ENCODE measurements at regions of chr6 and their contacts with region 1.

Region 1: GRCh38 chr6:137944793-137945498 is 77.9 kb downstream of the TNFAIP3 start:
- DNase-seq: no peak
- ATAC-seq: peak; percentile 59 to 88 (median 82)
- H3K4me3 ChIP-seq: peak overlapping the region in 1 of 12 donors; percentile 23
- H3K27ac ChIP-seq: no peak overlapping the region
- H3K4me1 ChIP-seq: peaks cover 0 to 16% (median 0%) of the 10 kb centered on the region in 12 donors
- H3K27me3 ChIP-seq: no peaks in the 10 kb centered on the region
- CTCF ChIP-seq: peak; percentile 63 to 88 (median 78)
- POLR2A ChIP-seq: no peak

Region 2: GRCh38 chr6:137799950-137800568 is 144.9 kb before region 1 on chr6:
- intact Hi-C with region 1: loop called in 4 of 10 experiments (anchors 5 to 10 kb)
- DNase-seq: peak in 3 of 5 donors; percentile 29 to 48 (median 48)
- ATAC-seq: peak in 3 of 4 donors; percentile 42 to 54 (median 46)
- H3K4me3 ChIP-seq: no peak overlapping the region
- H3K27ac ChIP-seq: no peak overlapping the region
- H3K4me1 ChIP-seq: peaks cover 0 to 24% (median under 1%) of the 10 kb centered on the region in 12 donors
- H3K27me3 ChIP-seq: no peaks in the 10 kb centered on the region
- CTCF ChIP-seq: peak; percentile 19 to 66 (median 54)
- POLR2A ChIP-seq: no peak

Region 3: DNA sequence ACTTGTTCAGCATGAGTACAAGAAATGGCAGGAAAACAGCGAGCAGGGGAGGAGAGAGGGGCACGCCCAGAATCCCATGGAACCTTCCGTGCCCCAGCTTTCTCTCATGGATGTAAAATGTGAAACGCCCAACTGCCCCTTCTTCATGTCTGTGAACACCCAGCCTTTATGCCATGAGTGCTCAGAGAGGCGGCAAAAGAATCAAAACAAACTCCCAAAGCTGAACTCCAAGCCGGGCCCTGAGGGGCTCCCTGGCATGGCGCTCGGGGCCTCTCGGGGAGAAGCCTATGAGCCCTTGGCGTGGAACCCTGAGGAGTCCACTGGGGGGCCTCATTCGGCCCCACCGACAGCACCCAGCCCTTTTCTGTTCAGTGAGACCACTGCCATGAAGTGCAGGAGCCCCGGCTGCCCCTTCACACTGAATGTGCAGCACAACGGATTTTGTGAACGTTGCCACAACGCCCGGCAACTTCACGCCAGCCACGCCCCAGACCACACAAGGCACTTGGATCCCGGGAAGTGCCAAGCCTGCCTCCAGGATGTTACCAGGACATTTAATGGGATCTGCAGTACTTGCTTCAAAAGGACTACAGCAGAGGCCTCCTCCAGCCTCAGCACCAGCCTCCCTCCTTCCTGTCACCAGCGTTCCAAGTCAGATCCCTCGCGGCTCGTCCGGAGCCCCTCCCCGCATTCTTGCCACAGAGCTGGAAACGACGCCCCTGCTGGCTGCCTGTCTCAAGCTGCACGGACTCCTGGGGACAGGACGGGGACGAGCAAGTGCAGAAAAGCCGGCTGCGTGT is 66.3 kb before region 1 on chr6:
- intact Hi-C with region 1: loop called in 2 of 10 experiments (anchors 5 kb)
- DNase-seq: peak; percentile 52 to 81 (median 65)
- ATAC-seq: peak in 3 of 4 donors; percentile 60 to 69 (median 62)
- H3K4me3 ChIP-seq: no peak overlapping the region
- H3K27ac ChIP-seq: peak overlapping the region; percentile 4 to 63 (median 36)
- H3K4me1 ChIP-seq: peaks cover 0 to 82% (median 21%) of the 10 kb centered on the region in 12 donors
- H3K27me3 ChIP-seq: no peaks in the 10 kb centered on the region
- CTCF ChIP-seq: peak in 5 of 12 donors; percentile 7 to 49 (median 11)
- POLR2A ChIP-seq: no peak

Region 4: DNA sequence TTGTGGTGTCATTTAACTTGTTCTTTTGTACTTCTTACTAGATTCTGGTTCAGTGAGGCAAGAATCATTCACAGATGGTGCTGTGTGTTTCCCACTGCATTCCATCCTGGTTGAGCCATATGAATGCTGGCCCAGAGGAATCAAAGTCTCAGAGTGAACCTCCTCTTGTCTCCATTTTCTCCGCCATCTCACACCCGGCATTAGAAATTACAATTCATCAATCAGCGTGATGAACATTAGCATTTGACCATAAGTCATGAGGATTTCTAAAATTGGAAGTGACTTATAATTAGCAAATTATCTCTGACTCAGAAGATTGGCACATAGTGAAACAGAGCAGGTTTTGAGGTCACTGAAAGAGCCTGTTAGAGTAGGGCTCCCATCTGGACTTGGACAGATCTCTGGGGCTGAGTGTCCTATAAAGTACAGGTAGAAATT is 52.7 kb before region 1 on chr6:
- intact Hi-C with region 1: no loop called
- DNase-seq: no peak
- ATAC-seq: peak in 3 of 4 donors; percentile 66 to 80 (median 79)
- H3K4me3 ChIP-seq: no peak overlapping the region
- H3K27ac ChIP-seq: no peak overlapping the region
- H3K4me1 ChIP-seq: peaks cover 0 to 17% (median 2%) of the 10 kb centered on the region in 12 donors
- H3K27me3 ChIP-seq: no peaks in the 10 kb centered on the region
- CTCF ChIP-seq: no peak
- POLR2A ChIP-seq: no peak

Region 5: GRCh38 chr6:138063726-138064125 is 118.8 kb after region 1 on chr6:
- intact Hi-C with region 1: no loop called
- DNase-seq: no peak
- ATAC-seq: no peak
- H3K4me3 ChIP-seq: no peak overlapping the region
- H3K27ac ChIP-seq: no peak overlapping the region
- H3K4me1 ChIP-seq: no peaks in the 10 kb centered on the region
- H3K27me3 ChIP-seq: no peaks in the 10 kb centered on the region
- CTCF ChIP-seq: no peak
- POLR2A ChIP-seq: no peak

Region 6: GRCh38 chr6:138372711-138373463 is 427.9 kb after region 1 on chr6:
- intact Hi-C with region 1: no loop called
- DNase-seq: no peak
- ATAC-seq: no peak
- H3K4me3 ChIP-seq: no peak overlapping the region
- H3K27ac ChIP-seq: no peak overlapping the region
- H3K4me1 ChIP-seq: no peaks in the 10 kb centered on the region
- H3K27me3 ChIP-seq: no peaks in the 10 kb centered on the region
- CTCF ChIP-seq: peak in 1 of 12 donors; percentile 16
- POLR2A ChIP-seq: no peak

Measured in heart left ventricle (tissue), 16 donors.